Caco-2 (cell line): ENCODE measurements at regions of chr9 and their contacts with region 1.

Region 1: DNA sequence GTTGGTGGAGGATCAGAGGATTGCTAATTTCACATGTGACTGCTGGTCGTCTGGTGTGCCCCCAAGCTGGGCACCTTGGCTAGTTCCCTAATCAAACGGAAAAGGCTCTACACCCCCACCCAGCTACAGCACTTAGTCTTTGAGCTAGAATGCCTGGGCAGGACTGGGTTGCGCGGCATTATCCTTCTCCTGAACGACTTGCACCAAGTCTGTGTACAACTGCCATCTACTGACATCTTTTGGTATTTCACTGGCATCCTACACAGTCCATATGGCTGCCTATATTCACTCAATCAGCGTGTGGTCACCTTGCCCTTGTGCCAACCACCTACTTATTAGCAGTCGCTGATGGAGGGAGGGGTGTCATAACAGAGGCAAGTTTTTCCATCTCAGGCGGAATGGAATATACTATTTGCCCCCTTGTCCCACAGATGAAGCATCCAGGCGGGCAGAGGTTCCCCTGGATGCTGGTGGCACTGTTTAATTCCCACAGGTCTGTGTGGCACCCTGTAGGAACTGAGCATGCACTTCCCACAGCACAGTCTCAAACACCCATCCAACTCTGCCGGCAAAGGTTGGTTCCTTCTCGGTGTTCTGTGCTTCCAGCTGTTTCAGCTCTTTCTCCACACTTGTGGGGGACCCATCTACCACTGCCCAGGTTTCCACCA is 150.1 kb downstream of the OSTF1 start:
- DNase-seq: peak; percentile 29
- H3K4me3 ChIP-seq: no peak overlapping the region
- H3K4me3 Mint-ChIP-seq: no peak overlapping the region
- H3K27ac Mint-ChIP-seq: no peak overlapping the region
- H3K4me1 ChIP-seq: no peaks in the 10 kb centered on the region
- H3K4me1 Mint-ChIP-seq: no peaks in the 10 kb centered on the region
- H3K27me3 ChIP-seq: no peaks in the 10 kb centered on the region
- H3K27me3 Mint-ChIP-seq: no peaks in the 10 kb centered on the region
- CTCF ChIP-seq: peak in 1 of 2 experiments; percentile 10

Region 2: GRCh38 chr9:75170898-75171360 is 67.5 kb before region 1 on chr9:
- CTCF ChIA-PET with region 1: no interaction called
- POLR2A ChIA-PET with region 1: no interaction called
- intact Hi-C with region 1: no loop called
- DNase-seq: no peak
- H3K4me3 ChIP-seq: no peak overlapping the region
- H3K4me3 Mint-ChIP-seq: no peak overlapping the region
- H3K27ac Mint-ChIP-seq: no peak overlapping the region
- H3K4me1 ChIP-seq: no peaks in the 10 kb centered on the region
- H3K4me1 Mint-ChIP-seq: no peaks in the 10 kb centered on the region
- H3K27me3 ChIP-seq: no peaks in the 10 kb centered on the region
- H3K27me3 Mint-ChIP-seq: no peaks in the 10 kb centered on the region
- CTCF ChIP-seq: no peak

Region 3: DNA sequence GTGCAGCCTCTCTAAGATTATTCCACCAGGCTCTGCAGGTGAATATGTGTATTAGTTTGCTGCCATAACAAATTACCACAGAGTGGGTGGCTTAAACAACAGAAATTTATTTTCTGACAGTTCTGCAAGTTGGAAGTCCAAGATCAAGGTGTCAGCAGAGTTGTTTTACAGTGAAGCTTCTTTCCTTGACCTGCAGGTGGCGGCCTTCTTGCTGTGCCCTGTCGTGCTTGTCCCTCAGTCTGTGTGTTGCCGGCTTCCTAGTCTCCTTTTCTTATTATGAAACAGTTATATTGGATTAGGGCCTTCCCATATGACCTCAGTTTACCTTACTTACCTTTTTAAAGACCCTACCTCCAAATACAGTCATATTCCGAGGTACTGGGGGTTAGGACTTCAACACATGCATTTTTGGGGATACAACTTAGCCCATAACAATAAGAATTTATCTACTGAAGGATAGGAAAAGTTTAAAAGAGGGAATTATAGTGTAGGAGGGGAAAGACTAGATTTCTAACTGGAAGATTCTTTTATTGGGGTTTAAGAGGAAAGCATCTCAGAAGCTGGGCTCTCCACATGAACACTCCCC is 52.8 kb before region 1 on chr9:
- CTCF ChIA-PET with region 1: no interaction called
- POLR2A ChIA-PET with region 1: no interaction called
- intact Hi-C with region 1: loop called (anchors 1 kb)
- DNase-seq: peak; percentile 5 to 31
- H3K4me3 ChIP-seq: no peak overlapping the region
- H3K4me3 Mint-ChIP-seq: no peak overlapping the region
- H3K27ac Mint-ChIP-seq: no peak overlapping the region
- H3K4me1 ChIP-seq: no peaks in the 10 kb centered on the region
- H3K4me1 Mint-ChIP-seq: no peaks in the 10 kb centered on the region
- H3K27me3 ChIP-seq: no peaks in the 10 kb centered on the region
- H3K27me3 Mint-ChIP-seq: peaks cover 7% of the 10 kb centered on the region
- CTCF ChIP-seq: peak in 1 of 2 experiments; percentile 44

Region 4: GRCh38 chr9:75200892-75201470 is 37.5 kb before region 1 on chr9:
- CTCF ChIA-PET with region 1: no interaction called
- POLR2A ChIA-PET with region 1: no interaction called
- intact Hi-C with region 1: loop called (anchors 1 kb)
- DNase-seq: peak in 1 of 2 experiments; percentile 4
- H3K4me3 ChIP-seq: no peak overlapping the region
- H3K4me3 Mint-ChIP-seq: no peak overlapping the region
- H3K27ac Mint-ChIP-seq: no peak overlapping the region
- H3K4me1 ChIP-seq: no peaks in the 10 kb centered on the region
- H3K4me1 Mint-ChIP-seq: no peaks in the 10 kb centered on the region
- H3K27me3 ChIP-seq: no peaks in the 10 kb centered on the region
- H3K27me3 Mint-ChIP-seq: no peaks in the 10 kb centered on the region
- CTCF ChIP-seq: no peak